Left colon (tissue), 2 donors: ENCODE measurements at regions of chr4 and their contacts with region 1.

Region 1: GRCh38 chr4:15231265-15232091 is 196.4 kb upstream of the C1QTNF7 start:
- DNase-seq: peak; percentile 44 to 76
- ATAC-seq: peak; percentile 72

Region 2: DNA sequence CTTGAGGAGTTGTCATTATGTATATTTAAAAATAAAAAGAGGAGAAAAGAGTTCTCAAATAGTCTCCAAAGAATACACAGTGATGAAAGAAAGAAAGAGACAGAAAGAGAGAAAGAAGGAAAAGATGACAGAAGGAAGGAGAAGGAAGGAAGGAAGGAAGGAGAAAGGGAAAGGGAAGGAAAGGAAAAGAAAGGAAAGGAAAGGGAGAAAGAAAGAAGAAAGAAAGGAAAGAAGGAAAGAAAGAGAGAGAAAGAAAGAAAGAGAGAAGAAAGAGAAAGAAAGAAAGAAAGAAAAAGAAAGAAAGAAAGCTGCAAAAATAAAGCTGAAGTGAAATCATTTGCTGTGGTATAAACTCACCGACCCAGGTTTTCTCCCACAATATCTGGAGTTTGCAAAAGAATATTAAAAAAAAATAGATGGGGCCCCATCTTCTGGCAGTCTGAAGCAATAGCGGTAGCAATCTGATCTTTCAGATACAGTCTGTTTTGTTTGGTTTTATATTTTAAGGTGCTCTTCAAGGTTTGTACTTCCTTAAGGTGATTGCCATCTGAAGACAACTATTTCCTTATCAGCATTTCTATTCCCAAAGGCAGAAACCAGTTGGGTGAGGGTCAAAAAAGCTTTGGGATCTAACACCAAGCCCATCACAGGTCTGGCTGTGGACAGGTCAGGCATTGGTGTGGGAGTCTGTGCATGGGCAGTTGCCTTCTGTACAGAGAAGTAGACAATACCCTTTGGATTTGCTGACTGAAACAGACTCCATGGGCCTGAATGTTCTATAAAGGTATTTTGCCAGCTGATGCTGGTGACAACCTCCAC is 68.8 kb before region 1 on chr4:
- intact Hi-C with region 1: no loop called
- DNase-seq: no peak
- ATAC-seq: no peak

Region 3: DNA sequence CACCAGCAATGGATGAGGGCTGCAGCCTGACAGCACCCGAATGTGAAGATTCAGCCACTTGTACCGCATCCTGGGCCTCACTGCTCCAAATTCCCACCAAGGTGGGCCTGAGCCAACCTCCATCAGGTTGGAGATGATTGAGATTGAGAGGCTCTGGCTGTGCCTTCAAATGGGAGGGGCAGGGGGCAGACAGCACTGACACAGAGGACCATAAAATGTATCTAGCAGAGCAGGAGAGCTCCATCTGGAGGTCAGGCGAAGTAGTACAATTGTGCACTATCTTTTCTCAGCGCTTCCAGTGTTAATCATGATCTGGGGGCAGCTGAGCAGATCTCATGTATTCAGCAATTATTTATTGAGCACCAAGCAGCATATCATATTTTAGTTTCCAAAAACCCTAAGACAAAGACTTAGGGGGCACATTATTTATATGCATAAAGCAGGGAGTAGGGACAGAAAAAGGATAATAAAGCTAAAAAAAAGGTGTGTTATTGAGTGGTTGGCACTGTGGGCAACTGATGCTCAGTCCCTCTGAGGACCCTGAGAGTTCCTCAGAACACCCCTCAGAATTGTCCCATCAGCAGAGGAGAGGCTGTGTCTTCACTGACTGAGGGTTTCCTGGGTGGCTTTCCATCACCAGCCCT is 164.8 kb after region 1 on chr4:
- intact Hi-C with region 1: loop called in 1 of 2 experiments (anchors 10 kb)
- DNase-seq: peak in 1 of 2 donors; percentile 57
- ATAC-seq: peak; percentile 68

Region 4: DNA sequence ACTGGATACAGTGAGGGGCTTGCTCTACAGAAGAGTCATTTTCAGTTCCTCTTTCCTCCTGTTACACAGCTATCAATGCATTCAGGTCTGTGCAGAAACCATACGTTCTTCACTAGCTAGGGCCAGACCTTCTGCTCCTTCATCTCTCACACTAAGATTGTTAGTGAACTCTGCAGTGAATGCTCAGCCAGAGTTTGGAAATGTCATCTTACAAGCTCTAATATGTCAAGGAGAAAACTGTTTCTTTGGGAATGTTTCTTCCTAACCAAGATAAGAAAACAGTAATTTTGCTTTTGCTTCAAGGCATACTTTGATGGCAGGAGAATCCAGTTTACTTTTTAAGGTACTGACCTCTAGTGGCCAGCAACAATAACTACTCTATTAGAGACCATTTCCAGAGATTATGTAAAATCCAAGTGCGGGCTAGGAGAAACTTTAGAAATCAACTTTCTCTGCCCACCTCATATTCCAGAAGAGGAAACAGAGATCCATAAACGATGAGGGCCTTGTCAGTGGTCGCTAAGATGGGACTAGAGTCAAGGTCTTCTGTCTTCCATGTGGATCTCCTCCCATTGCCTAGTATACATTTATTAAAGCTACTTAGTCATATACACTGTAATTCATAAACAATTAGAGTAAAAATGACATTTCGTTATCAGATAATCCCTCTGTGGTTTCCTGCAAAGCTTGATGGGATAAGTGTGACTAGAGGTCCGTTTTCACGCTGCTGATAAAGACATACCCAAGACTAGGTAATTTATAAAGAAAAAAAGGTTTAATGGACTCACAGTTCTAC is 226.1 kb after region 1 on chr4:
- intact Hi-C with region 1: loop called (anchors 5 kb)
- DNase-seq: no peak
- ATAC-seq: peak; percentile 66